Panc1 (cell line): ENCODE measurements at regions of chr7 and their contacts with region 1.

Region 1: DNA sequence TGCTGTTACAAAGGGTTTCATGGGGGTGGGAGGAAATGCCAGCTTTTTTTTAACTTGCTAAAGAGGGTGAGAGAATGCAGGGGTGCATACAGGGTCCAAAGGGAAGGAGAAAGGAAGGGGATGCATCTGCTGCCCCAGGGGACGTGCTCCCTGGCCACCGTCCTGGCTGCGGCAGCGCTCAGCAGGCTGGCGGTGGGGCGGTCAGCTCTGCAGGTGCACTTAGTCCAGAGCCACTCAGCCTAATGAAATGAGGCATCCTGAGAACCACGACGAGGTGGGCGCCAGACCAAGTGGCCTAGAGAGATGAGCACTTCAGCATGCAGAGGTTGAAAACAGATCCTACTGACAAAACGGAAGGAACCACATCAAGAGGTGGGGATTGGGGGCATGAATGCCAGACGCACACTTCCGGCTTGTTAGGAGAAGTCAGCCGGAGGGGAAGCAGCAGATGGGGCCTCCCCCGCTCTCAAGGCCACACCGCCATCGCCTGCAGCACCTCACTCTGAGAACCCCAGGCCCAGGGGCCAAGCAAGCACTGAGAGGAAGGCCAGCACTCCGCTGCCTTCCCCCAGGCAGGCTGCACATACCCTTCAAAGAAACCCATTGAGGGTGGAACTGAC is 94.5 kb downstream of the MAD1L1 start:
- DNase-seq: no peak
- ATAC-seq: no peak
- H3K4me3 ChIP-seq: no peak overlapping the region
- H3K27ac ChIP-seq: no peak overlapping the region
- H3K4me1 ChIP-seq: no peaks in the 10 kb centered on the region
- H3K27me3 ChIP-seq: no peaks in the 10 kb centered on the region
- CTCF ChIP-seq: no peak

Region 2: GRCh38 chr7:1611708-1612241 is 526.5 kb before region 1 on chr7:
- CTCF ChIA-PET with region 1: no interaction called
- POLR2A ChIA-PET with region 1: no interaction called
- in situ Hi-C with region 1: no loop called
- intact Hi-C with region 1: no loop called
- DNase-seq: no peak
- ATAC-seq: peak; percentile 76
- H3K4me3 ChIP-seq: no peak overlapping the region
- H3K27ac ChIP-seq: no peak overlapping the region
- H3K4me1 ChIP-seq: no peaks in the 10 kb centered on the region
- H3K27me3 ChIP-seq: no peaks in the 10 kb centered on the region
- CTCF ChIP-seq: no peak

Region 3: DNA sequence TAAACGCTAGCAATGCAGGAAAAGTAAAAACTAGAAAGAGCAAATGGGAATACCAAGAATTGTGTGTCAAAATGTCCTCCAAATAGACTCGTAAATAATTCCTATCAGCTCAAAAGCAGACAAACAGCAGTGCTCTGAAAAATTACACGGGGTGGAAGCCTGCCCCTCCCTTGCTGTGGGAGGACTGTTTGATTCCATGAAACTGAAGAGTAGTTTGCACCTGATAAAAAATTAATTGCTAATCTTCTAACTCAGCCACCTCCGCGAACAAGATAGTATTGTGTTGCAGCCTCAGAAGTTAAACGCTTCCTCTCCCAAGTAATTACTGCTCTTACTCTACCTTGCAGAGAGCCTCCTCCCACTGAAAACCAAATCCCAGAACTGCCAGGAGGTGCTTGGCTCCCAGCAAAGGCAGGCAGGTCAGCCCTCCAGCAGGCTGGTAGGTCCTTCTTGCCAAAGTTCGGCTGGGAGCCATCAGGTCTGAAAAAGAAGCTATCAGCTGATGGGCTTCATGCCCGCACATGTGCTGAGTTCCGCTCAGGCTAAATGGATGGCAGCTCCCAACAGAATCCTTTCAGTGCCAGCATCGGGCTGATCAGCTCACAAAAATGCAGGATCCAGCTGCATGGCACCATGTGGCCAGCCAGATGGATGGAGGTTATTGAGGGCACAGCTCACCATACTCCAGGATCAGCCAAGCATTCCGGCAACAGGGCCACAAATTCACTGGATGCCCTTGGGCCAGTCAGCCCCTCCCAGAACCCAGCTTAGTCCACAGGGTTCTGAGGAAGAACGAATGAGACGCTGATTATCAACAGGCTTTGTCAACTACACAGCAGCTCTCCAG is 57.4 kb after region 1 on chr7:
- CTCF ChIA-PET with region 1: no interaction called
- POLR2A ChIA-PET with region 1: no interaction called
- in situ Hi-C with region 1: loop called (anchors 10 kb)
- intact Hi-C with region 1: no loop called
- DNase-seq: no peak
- ATAC-seq: no peak
- H3K4me3 ChIP-seq: no peak overlapping the region
- H3K27ac ChIP-seq: no peak overlapping the region
- H3K4me1 ChIP-seq: no peaks in the 10 kb centered on the region
- H3K27me3 ChIP-seq: no peaks in the 10 kb centered on the region
- CTCF ChIP-seq: no peak